ENCODE measurements at regions of chr1 and their contacts with region 1.

Region 1: GRCh38 chr1:202810615-202811295 is at the start of gene PCAT6:
- DNase-seq: peak; percentile 88
- H3K4me3 Mint-ChIP-seq: peak within 1 kb of the TSS; percentile 96
- H3K27ac Mint-ChIP-seq: peak within 1 kb of the TSS; percentile 96
- H3K4me1 Mint-ChIP-seq: peaks cover 55% of the 10 kb centered on the region
- H3K27me3 Mint-ChIP-seq: peaks cover 9% of the 10 kb centered on the region
- total RNA-seq, gene PCAT6: 1.1 and 1.7 TPM in 2 replicates

Region 2: DNA sequence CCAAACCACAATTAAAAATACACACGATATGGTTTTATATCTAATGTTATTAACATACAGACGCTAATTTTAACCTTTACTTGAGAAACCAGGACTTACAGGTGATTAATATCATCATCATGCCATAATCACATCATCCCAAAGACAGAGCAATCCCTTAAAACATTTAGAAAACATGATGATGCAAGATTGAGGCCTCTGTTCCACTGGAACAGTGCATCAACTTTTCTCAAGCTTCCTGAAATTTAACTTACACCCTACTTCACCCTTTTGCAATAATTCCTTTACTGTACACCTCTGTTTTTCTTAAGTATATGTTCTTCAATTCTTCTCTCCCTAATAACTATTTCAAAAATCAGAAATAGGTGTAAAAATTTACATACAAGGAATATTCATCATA is 40.6 kb before region 1 on chr1:
- intact Hi-C with region 1: loop called (anchors 5 kb)
- DNase-seq: no peak
- H3K4me3 Mint-ChIP-seq: no peak overlapping the region
- H3K27ac Mint-ChIP-seq: no peak overlapping the region
- H3K4me1 Mint-ChIP-seq: no peaks in the 10 kb centered on the region
- H3K27me3 Mint-ChIP-seq: no peaks in the 10 kb centered on the region

Region 3: GRCh38 chr1:202852163-202852904 is 41.6 kb after region 1 on chr1:
- intact Hi-C with region 1: loop called (anchors 1 kb)
- DNase-seq: no peak
- H3K4me3 Mint-ChIP-seq: no peak overlapping the region
- H3K27ac Mint-ChIP-seq: peak overlapping the region; percentile 18
- H3K4me1 Mint-ChIP-seq: peaks cover 37% of the 10 kb centered on the region
- H3K27me3 Mint-ChIP-seq: peaks cover 2% of the 10 kb centered on the region

Region 4: GRCh38 chr1:202888531-202889360 is 78.0 kb after region 1 on chr1 and contains the start of gene RABIF:
- intact Hi-C with region 1: loop called (anchors 1 kb)
- DNase-seq: peak; percentile 95
- H3K4me3 Mint-ChIP-seq: peak within 1 kb of the TSS; percentile 96
- H3K27ac Mint-ChIP-seq: peak within 1 kb of the TSS; percentile 98
- H3K4me1 Mint-ChIP-seq: peaks cover 25% of the 10 kb centered on the region
- H3K27me3 Mint-ChIP-seq: no peaks in the 10 kb centered on the region
- total RNA-seq, gene RABIF: 11.8 and 13.4 TPM in 2 replicates

Region 5: DNA sequence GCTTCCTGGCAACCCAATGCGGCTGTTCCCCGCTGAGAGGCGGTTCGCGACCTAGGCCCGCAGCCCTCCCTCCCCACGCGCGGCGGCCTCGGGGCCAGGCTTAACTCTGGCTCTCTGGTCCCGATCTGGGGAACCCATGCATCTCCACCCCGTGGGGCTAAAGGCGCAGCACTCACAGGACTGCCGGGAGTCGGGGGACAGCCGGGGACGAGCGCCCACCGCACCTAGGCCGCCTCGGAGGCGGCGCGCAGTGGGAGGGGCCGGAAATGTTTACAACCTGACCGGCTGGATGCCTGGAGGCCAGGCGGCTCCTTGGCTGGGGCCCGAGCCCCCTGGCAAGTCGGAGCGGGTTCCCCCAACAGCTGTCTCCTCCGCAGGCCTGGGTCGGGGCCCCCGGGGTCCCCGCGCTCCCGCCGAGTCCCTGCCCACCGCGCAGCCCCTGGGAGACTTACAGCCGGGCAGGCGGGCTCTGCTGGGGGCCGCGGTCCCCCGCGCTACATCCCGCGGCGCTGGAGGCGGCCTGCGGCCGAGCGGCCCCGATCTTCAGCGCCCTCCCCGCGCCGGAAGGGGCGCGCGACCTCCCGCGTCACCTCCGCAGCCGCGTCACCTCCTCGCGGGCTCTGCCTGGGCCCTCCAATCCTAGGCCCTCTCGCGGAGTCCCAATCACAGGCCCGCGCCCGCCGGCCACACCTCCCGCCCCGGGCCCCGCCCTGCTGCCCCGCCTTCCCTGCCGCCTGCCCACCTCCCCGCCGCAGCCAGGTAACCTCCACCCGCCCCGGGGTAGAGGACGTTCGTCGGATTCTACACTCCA is 147.2 kb after region 1 on chr1 and contains the start of gene ADIPOR1:
- intact Hi-C with region 1: loop called (anchors 2 kb)
- DNase-seq: peak; percentile 92
- H3K4me3 Mint-ChIP-seq: peak within 1 kb of the TSS; percentile 89
- H3K27ac Mint-ChIP-seq: peak within 1 kb of the TSS; percentile 80
- H3K4me1 Mint-ChIP-seq: peaks cover 46% of the 10 kb centered on the region
- H3K27me3 Mint-ChIP-seq: peaks cover 2% of the 10 kb centered on the region
- total RNA-seq, gene ADIPOR1: 88.7 and 93.3 TPM in 2 replicates

Region 6: DNA sequence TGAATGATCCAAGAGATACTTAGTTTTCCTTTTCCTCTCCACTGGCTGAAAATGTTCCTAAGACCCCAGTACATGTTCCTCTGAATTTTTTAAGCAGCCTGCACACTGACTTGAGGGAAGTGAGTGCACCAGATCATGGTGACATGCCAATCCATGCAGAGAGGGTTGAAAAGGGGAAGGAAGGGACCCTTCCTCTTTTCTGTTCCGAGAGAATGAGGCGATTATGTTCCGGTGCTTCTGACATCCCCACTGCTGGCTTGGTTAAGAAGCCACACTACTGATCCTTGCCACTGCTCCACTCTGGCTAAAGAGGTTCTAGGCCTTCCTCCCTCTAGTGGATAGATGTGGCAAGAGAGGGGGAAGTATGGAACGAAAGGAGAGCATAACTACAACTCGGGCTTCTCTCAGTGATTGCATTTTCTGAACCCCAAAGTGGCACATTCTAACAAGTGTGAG is 158.1 kb after region 1 on chr1:
- intact Hi-C with region 1: no loop called
- DNase-seq: peak; percentile 20
- H3K4me3 Mint-ChIP-seq: peak overlapping the region; percentile 48
- H3K27ac Mint-ChIP-seq: no peak overlapping the region
- H3K4me1 Mint-ChIP-seq: peaks cover 35% of the 10 kb centered on the region
- H3K27me3 Mint-ChIP-seq: peaks cover 11% of the 10 kb centered on the region

Region 7: DNA sequence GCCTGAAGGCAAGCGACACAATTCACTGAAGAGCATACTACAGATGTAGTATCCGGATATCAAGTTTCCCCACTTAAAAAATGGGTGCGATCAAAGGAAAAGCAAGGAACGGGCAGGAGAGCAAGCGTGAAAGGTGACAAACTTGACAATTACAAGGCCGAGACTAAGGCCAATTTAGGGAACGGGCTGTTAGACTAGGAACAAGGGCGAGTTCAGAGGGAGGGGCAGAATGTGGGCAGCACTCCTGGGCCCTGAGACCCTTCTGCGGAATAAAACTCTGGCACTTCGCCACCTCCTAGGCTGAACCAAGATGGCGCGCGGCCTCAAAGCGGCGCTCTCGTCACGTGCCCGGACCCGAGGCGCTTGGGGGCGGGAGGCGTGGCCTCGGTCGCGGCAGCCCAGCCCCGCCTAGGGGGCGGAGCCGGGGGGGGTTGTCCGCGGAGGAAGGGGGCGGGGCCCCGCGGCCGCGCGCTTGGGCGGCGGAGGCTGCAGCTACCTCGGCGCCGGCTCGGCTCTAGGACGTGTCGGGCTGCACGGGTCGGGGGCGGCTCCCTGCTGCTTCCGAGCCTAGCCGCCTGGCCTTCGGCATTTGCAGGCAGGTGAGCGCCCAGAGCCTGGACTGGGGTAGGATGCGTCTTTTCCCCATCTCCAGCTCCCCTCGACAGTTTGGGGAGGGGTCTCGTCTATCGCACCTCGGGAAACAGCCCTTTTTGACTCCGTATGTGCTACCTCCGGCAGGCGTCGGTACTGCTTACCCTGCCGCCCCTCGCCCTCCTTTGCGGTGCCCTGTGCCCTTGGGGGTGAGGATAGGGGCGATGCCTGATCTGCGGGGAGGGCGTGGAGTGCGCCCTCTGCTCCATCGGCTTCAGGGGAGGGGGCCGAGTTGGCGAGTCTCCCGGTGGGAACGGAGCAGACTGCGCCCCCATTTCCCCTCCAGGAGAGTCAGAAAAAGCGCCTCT is 215.6 kb after region 1 on chr1 and contains the start of gene PPFIA4:
- intact Hi-C with region 1: loop called (anchors 1 kb)
- DNase-seq: peak; percentile 87
- H3K4me3 Mint-ChIP-seq: peak within 1 kb of the TSS; percentile 85
- H3K27ac Mint-ChIP-seq: peak within 1 kb of the TSS; percentile 65
- H3K4me1 Mint-ChIP-seq: peaks cover 25% of the 10 kb centered on the region
- H3K27me3 Mint-ChIP-seq: no peaks in the 10 kb centered on the region
- total RNA-seq, gene PPFIA4: 11.5 and 14.9 TPM in 2 replicates

Region 8: DNA sequence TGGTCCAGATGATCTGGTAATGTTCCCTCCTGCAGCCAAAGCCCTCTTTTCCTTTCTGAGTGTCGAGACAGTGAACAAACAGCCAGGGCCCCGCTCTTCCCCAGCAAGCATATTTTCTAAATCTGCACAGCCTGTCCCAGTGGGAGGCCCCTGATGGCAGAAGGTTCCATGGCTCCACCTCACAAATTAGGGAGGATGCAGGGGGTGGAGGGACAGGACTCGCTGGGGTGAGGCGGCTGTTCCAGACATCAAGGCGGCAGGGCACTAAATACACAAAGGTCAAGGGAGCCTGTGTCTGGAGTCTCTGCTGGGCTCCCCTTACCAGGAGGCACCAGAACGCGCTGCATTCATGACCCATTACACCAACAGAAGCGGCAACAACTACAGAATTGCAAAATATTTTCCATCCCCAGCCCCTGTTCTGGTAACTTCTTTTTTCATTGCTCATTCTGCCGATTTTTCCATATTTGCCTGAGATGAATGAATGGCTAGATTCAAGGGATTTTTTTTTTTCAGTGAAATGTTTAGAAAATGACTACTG is 637.8 kb after region 1 on chr1:
- intact Hi-C with region 1: no loop called
- DNase-seq: no peak
- H3K4me3 Mint-ChIP-seq: no peak overlapping the region
- H3K27ac Mint-ChIP-seq: no peak overlapping the region
- H3K4me1 Mint-ChIP-seq: no peaks in the 10 kb centered on the region
- H3K27me3 Mint-ChIP-seq: peaks cover 29% of the 10 kb centered on the region